ENCODE measurements at regions of chr10 and their contacts with region 1.

Region 1: GRCh38 chr10:37976091-37976879 is at the start of gene ZNF25:
- DNase-seq: peak; percentile 99
- ATAC-seq: peak; percentile 99
- H3K4me3 ChIP-seq: peak within 1 kb of the TSS; percentile 89
- H3K27ac ChIP-seq: peak within 1 kb of the TSS; percentile 98
- H3K4me1 ChIP-seq: no peaks in the 10 kb centered on the region
- H3K27me3 ChIP-seq: no peaks in the 10 kb centered on the region
- total RNA-seq, gene ZNF25: 20.6 to 24.8 (median 23.0) TPM

Region 2: GRCh38 chr10:37857287-37858211 is 118.7 kb before region 1 on chr10 and contains the start of gene ZNF248:
- intact Hi-C with region 1: loop called in 1 of 4 experiments (anchors 10 kb)
- DNase-seq: peak; percentile 97 to 99 (median 99)
- ATAC-seq: peak; percentile 100
- H3K4me3 ChIP-seq: peak within 1 kb of the TSS; percentile 63
- H3K27ac ChIP-seq: peak within 1 kb of the TSS; percentile 97
- H3K4me1 ChIP-seq: no peaks in the 10 kb centered on the region
- H3K27me3 ChIP-seq: no peaks in the 10 kb centered on the region
- total RNA-seq, gene ZNF248: 11.1 to 18.4 (median 14.6) TPM

Region 3: GRCh38 chr10:37906382-37906781 is 69.9 kb before region 1 on chr10:
- intact Hi-C with region 1: no loop called
- DNase-seq: no peak
- ATAC-seq: no peak
- H3K4me3 ChIP-seq: no peak overlapping the region
- H3K27ac ChIP-seq: no peak overlapping the region
- H3K4me1 ChIP-seq: no peaks in the 10 kb centered on the region
- H3K27me3 ChIP-seq: no peaks in the 10 kb centered on the region

Region 4: GRCh38 chr10:38010119-38010903 is 34.0 kb after region 1 on chr10 and contains the start of gene ZNF33A:
- intact Hi-C with region 1: loop called in 1 of 4 experiments (anchors 2 kb)
- DNase-seq: peak; percentile 91 to 96 (median 96)
- ATAC-seq: peak; percentile 97 to 98
- H3K4me3 ChIP-seq: peak within 1 kb of the TSS; percentile 66
- H3K27ac ChIP-seq: peak within 1 kb of the TSS; percentile 82
- H3K4me1 ChIP-seq: no peaks in the 10 kb centered on the region
- H3K27me3 ChIP-seq: no peaks in the 10 kb centered on the region
- total RNA-seq, gene ZNF33A: 17.6 to 26.5 (median 25.2) TPM

Region 5: DNA sequence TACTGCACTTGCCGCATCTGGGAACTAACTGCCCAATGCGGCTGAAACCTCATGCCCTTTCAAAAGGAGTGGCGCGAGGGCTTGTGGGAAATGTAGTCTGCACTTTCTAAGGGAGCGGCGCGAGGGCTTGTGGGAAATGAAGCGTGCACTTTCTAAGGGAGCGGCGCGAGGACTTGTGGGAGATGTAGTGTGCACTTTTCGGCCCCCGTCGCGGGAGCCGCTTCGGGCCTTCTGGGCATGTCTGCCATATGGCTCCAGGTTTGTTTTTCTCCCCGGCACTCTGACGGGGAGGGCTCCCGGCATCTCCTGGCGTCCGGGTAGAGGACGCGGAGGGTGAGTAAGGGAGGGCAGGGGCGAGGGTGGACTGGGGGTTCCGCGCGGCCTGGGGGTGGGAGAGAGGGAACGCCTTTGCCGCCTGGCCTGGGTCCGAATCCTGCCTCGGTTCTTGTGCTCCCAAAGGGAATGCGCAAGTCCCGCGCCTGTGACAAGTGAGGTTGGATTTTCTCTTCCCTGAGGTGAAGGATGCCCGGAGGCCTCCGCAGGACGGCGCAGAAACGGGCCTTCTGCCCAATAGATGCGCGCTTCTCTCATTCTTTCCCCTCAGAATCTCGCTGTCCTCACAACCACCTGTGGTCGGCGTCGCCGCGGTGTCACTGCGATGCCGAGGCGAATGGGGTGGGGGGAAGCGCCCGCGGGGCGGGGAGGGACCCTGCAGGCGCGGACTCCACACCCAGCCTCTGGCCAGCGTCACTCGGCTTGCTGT is 118.1 kb after region 1 on chr10 and contains the start of gene ZNF37A:
- intact Hi-C with region 1: loop called in 1 of 4 experiments (anchors 10 kb)
- DNase-seq: peak; percentile 94 to 97 (median 96)
- ATAC-seq: peak; percentile 99 to 100
- H3K4me3 ChIP-seq: peak within 1 kb of the TSS; percentile 58
- H3K27ac ChIP-seq: peak within 1 kb of the TSS; percentile 50
- H3K4me1 ChIP-seq: peaks cover 6% of the 10 kb centered on the region
- H3K27me3 ChIP-seq: no peaks in the 10 kb centered on the region
- total RNA-seq, gene ZNF37A: 10.3 to 12.8 (median 11.8) TPM